GM13976 (cell line): ENCODE measurements at regions of chr2 and their contacts with region 1.

Region 1: GRCh38 chr2:64330281-64331113 is 123.5 kb upstream of the LGALSL start:
- DNase-seq: peak; percentile 42
- CTCF ChIP-seq: peak; percentile 90

Region 2: GRCh38 chr2:64040161-64040560 is 290.3 kb before region 1 on chr2:
- in situ Hi-C with region 1: no loop called
- DNase-seq: no peak
- CTCF ChIP-seq: no peak

Region 3: GRCh38 chr2:64052468-64053241 is 277.8 kb before region 1 on chr2:
- in situ Hi-C with region 1: loop called (anchors 5 kb)
- DNase-seq: no peak
- CTCF ChIP-seq: no peak

Region 4: GRCh38 chr2:64488050-64488974 is 157.8 kb after region 1 on chr2:
- in situ Hi-C with region 1: loop called (anchors 5 kb)
- DNase-seq: peak; percentile 69
- CTCF ChIP-seq: peak; percentile 91

Region 5: GRCh38 chr2:64763126-64763525 is 432.6 kb after region 1 on chr2:
- in situ Hi-C with region 1: no loop called
- DNase-seq: no peak
- CTCF ChIP-seq: no peak

Region 6: DNA sequence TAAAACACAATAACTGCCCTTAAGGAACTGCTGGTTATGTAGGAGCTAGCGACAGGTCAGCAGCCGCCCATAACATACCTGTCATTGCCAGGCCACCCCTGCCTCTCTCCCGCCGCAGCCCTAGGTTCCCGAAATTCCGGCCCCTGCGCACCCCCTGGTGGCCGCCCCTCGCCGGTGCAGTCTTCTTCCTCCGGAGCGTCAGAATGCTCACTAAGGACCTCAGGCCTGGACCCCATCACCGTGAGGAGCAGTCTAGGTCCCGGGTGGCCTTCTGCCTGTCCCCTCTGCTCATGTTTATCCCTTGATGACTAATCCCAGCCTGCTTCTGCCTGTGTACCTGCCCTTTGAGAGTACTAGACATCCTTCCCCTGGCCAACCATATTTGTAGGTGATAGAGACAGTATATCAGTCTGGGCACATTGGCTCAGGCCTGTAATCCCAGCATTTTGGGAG is 543.0 kb after region 1 on chr2:
- in situ Hi-C with region 1: loop called (anchors 25 kb)
- DNase-seq: peak; percentile 83
- CTCF ChIP-seq: peak; percentile 95

Region 7: DNA sequence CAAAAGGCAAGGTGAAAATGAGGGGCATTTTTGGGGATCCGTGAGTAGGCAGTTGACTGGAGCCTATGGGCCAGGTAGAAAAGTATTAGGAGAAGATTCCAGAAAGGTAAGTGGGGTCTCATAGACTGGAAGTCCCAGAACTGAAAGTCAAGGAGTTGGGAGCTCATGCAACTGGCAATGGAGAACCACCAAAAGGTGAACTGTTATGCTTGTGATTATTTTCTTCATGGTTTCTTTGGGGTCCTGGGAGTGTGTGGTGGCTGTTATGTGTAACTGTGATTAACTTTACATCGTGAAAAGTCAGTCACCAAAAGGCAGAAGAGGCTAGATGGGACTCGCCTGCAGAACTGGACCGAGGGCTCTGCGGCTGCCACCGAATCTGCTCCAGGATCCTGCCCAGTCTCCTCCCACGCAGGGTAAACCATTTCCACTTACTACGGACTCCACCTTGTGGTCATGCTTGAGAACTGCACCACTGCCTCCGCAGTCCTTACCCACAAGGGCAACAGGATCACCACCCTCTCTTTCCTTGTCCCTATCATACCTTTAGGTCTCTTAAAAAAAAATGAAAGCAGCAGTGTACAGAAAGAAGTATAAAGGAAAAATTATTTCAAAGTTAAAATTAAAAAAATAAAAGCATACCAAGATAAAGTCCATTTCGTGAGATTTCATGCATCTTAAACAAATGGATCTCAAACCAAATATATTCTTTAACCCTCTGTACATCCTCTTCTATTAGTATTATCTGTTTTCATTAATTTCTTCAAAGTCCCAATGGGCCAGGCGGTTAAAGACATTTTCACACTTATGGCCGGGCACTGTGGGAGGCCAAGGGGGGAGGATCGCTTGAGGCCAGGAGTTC is 710.1 kb after region 1 on chr2:
- in situ Hi-C with region 1: loop called (anchors 25 kb)
- DNase-seq: peak; percentile 75
- CTCF ChIP-seq: peak; percentile 90